Dorsolateral prefrontal cortex (tissue), 120 donors: ENCODE measurements at regions of chr10 and their contacts with region 1.

Region 1: DNA sequence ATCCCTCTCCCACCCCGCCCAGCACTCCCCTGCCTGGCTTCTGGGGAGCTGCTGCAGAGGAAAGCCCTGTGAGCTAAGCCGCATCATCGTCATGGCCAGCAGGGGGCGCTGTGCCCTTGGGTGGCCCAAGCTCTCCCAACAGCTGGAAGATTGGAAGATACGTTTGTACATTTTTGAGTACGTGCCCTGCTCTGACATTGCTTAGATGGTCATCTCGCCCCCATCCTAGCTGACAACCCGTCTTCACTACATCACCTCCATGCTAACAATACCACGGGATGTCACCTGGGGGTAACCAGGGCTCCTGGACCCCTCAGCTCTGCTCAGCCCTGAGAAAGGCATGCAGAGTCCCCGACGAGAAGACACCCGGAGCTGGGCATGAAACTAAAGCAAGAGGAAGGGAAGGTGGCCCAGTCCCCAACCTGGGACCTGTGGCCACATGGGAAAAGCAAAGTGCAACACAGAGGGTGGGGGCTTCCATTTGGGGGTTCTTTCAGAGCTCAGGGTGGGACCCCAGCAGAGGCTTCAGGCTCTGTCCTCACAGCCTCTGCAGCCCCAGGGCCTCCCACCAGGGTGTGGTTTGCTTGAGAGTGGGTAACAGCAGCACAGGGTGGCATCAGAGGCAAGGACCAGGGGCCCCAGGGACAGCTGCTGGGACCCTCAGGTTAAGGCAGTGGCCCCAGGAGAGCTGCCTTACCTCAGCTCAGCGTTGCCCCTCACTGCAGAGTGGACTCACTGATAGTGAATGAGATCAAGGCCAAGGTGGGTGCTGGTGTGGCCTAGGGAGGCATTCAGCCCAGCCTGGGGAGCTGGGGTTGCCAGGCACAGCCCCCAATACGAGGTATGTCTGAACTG is 136.7 kb downstream of the PTPN20 start:
- DNase-seq: peak; percentile 28 to 83 (median 74)
- H3K4me3 ChIP-seq: no peak overlapping the region
- H3K27ac ChIP-seq: no peak overlapping the region
- H3K27me3 ChIP-seq: no peaks in the 10 kb centered on the region
- CTCF ChIP-seq: peak; percentile 61 to 92 (median 86)

Region 2: DNA sequence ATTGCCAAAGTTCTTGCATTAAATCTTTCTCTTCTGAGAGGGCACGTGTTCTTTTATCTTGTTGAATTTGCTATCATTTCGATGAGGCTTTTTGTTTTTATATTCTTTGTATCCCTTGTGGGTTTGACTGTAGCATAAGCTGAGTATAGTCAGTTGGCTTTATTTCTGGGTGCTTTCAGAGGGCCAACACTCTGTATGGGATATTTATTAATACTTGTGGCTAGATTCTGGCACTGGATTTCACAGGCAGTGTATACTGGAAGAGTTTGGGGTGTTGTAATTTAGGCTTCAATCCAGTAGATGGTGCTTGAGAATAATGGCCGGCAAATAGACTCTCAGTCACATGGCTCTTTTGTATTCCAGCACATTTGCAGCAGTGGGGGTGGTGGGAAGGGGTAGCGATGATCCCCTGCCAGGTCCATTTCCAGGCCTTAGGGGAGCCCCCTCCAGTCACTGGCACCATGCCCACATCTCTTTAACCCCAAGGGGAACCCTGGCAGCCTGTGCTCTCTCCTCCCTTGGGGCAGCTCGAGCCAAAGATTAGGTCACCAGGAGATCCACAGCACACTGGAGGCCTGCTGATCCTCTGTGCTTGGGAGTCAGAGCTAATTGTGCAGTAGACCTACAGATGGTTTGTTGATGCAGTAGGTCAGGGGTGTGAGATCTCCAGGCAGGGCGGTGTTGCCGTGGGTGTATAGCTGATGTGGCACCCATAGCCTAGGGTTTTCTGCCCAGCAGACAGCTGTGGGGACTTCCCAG is 54.9 kb before region 1 on chr10:
- intact Hi-C with region 1: loop called in 1 of 2 experiments (anchors 5 kb)
- DNase-seq: peak in 5 of 10 donors; percentile 21 to 57 (median 45)
- H3K4me3 ChIP-seq: peak overlapping the region in 12 of 59 donors; percentile 8 to 55 (median 28)
- H3K27ac ChIP-seq: peak overlapping the region in 36 of 59 donors; percentile 1 to 74 (median 60)
- H3K27me3 ChIP-seq: no peaks in the 10 kb centered on the region
- CTCF ChIP-seq: peak in 53 of 56 donors; percentile 22 to 82 (median 56)

Region 3: GRCh38 chr10:47253651-47254375 is 205.9 kb after region 1 on chr10:
- intact Hi-C with region 1: loop called in 1 of 2 experiments (anchors 5 kb)
- DNase-seq: peak in 3 of 10 donors; percentile 12 to 54 (median 51)
- H3K4me3 ChIP-seq: peak overlapping the region in 2 of 59 donors; percentile 1 to 12
- H3K27ac ChIP-seq: peak overlapping the region in 19 of 59 donors; percentile 4 to 70 (median 38)
- H3K27me3 ChIP-seq: peaks cover 0 to 2% (median 0%) of the 10 kb centered on the region in 45 donors
- CTCF ChIP-seq: no peak

Region 4: GRCh38 chr10:47311932-47312662 is 264.2 kb after region 1 on chr10:
- intact Hi-C with region 1: loop called (anchors 1 to 5 kb)
- DNase-seq: peak; percentile 72 to 89 (median 86)
- H3K4me3 ChIP-seq: no peak overlapping the region
- H3K27ac ChIP-seq: no peak overlapping the region
- H3K27me3 ChIP-seq: peaks cover 0 to 4% (median 0%) of the 10 kb centered on the region in 45 donors
- CTCF ChIP-seq: peak; percentile 20 to 95 (median 87)